ENCODE measurements at regions of chr5 and their contacts with region 1.

Region 1: GRCh38 chr5:140174465-140175366 is at the start of gene CYSTM1:
- DNase-seq: peak; percentile 96
- ATAC-seq: peak; percentile 83
- H3K4me3 Mint-ChIP-seq: peak within 1 kb of the TSS; percentile 93
- H3K27ac Mint-ChIP-seq: peak within 1 kb of the TSS; percentile 89
- H3K4me1 Mint-ChIP-seq: peaks cover 15% of the 10 kb centered on the region
- H3K27me3 Mint-ChIP-seq: no peaks in the 10 kb centered on the region
- CTCF ChIP-seq: no peak
- total RNA-seq, gene CYSTM1: 20.1 and 23.3 TPM in 2 replicates

Region 2: GRCh38 chr5:138752951-138753793 is 1421.5 kb before region 1 on chr5 and contains the start of gene CTNNA1:
- CTCF ChIA-PET with region 1: no interaction called
- POLR2A ChIA-PET with region 1: no interaction called
- intact Hi-C with region 1: loop called (anchors 10 kb)
- DNase-seq: peak; percentile 72
- ATAC-seq: peak; percentile 77
- H3K4me3 Mint-ChIP-seq: peak within 1 kb of the TSS; percentile 82
- H3K27ac Mint-ChIP-seq: peak within 1 kb of the TSS; percentile 53
- H3K4me1 Mint-ChIP-seq: peaks cover 26% of the 10 kb centered on the region
- H3K27me3 Mint-ChIP-seq: no peaks in the 10 kb centered on the region
- CTCF ChIP-seq: no peak
- total RNA-seq, gene CTNNA1: 76.0 and 77.7 TPM in 2 replicates

Region 3: DNA sequence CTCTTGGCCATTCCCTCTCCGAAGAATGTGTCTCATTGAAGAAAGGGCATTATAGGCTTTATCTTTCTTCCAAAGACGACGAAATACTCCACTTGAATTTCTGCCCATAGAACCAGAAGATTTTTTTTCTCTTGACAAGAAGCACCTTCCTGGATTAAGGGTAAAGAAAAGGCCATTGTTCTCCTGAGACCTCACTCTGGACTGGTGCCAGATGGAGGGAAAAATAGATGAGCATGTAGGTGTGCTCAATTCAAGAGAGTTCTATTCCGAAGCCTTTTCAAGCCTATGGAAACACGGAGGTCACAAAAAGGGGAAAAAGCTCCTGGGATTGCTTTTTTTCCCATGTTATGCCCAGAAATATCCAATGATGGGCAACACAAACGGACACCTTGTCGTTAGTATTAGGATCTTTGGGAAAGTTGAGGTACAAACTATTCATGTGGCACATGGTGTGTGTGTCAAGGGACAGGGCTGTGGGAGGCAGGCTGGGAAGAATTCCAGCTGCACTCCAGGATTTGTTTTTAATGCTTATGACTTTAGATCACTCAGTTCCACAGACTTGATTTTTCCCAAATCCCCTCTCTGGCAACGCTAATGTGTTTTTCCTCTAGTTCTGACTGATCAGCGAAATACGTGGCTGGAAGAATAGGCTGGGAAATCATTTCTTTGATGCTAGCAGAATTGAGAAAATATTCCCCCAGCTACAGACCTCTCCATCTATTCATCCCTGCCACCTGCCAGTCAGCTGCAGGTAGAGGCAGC is 1066.5 kb before region 1 on chr5:
- CTCF ChIA-PET with region 1: no interaction called
- POLR2A ChIA-PET with region 1: no interaction called
- intact Hi-C with region 1: no loop called
- DNase-seq: no peak
- ATAC-seq: no peak
- H3K4me3 Mint-ChIP-seq: no peak overlapping the region
- H3K27ac Mint-ChIP-seq: no peak overlapping the region
- H3K4me1 Mint-ChIP-seq: no peaks in the 10 kb centered on the region
- H3K27me3 Mint-ChIP-seq: no peaks in the 10 kb centered on the region
- CTCF ChIP-seq: no peak

Region 4: GRCh38 chr5:139439013-139439903 is 735.5 kb before region 1 on chr5 and contains the start of gene DNAJC18:
- CTCF ChIA-PET with region 1: no interaction called
- POLR2A ChIA-PET with region 1: no interaction called
- intact Hi-C with region 1: loop called (anchors 10 kb)
- DNase-seq: peak; percentile 87
- ATAC-seq: peak; percentile 95
- H3K4me3 Mint-ChIP-seq: peak within 1 kb of the TSS; percentile 99
- H3K27ac Mint-ChIP-seq: peak within 1 kb of the TSS; percentile 99
- H3K4me1 Mint-ChIP-seq: peaks cover 12% of the 10 kb centered on the region
- H3K27me3 Mint-ChIP-seq: no peaks in the 10 kb centered on the region
- CTCF ChIP-seq: no peak
- total RNA-seq, gene DNAJC18: 9.1 and 9.6 TPM in 2 replicates

Region 5: DNA sequence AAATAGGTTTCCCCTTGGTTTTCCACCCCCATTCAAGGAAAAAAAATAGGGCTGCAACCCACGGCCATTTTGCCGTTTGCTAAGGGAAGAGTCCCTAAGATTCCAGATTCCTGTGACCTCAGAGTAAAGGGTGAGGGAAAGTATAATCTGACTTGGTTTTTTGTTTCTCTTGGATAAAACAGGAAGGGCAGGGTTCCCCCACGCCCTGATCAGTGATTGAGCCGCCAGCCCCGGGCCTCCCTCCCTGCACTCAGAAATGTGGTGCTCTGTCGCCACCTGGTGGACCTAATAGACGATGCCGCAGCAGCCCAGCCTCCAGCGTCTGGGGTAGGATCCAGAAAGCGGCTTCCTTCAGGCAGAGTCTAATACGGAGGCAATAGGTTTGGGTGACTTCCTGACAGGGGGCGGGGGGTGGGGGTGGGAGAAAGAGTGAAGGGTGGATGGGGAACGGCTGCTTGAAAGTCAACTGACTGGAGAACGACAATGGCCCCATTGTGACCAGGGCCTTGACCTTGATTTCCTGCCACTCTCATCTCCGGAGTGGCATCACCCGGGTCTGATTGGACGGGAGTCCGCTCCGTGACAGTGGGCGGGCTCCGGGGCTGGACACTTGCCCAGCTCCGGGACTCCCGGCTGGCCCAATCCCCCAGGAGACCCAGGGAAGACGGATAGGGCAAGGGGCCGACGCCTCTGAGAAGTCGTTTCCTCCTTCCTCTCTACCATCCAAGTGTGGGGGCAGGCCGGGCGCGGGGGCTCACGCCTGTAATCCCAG is 17.5 kb before region 1 on chr5:
- CTCF ChIA-PET with region 1: no interaction called
- POLR2A ChIA-PET with region 1: no interaction called
- intact Hi-C with region 1: loop called (anchors 1 kb)
- DNase-seq: peak; percentile 75
- ATAC-seq: peak; percentile 100
- H3K4me3 Mint-ChIP-seq: peak overlapping the region; percentile 66
- H3K27ac Mint-ChIP-seq: no peak overlapping the region
- H3K4me1 Mint-ChIP-seq: peaks cover 10% of the 10 kb centered on the region
- H3K27me3 Mint-ChIP-seq: no peaks in the 10 kb centered on the region
- CTCF ChIP-seq: no peak

Region 6: GRCh38 chr5:140564196-140565023 is 389.7 kb after region 1 on chr5 and contains the starts of genes APBB3 and SLC35A4:
- CTCF ChIA-PET with region 1: no interaction called
- POLR2A ChIA-PET with region 1: no interaction called
- intact Hi-C with region 1: loop called (anchors 1 kb)
- DNase-seq: peak; percentile 89
- ATAC-seq: peak; percentile 90
- H3K4me3 Mint-ChIP-seq: peak within 1 kb of the TSS; percentile 98
- H3K27ac Mint-ChIP-seq: peak within 1 kb of the TSS; percentile 90
- H3K4me1 Mint-ChIP-seq: peaks cover 57% of the 10 kb centered on the region
- H3K27me3 Mint-ChIP-seq: no peaks in the 10 kb centered on the region
- CTCF ChIP-seq: no peak
- total RNA-seq, gene APBB3: 36.0 and 37.5 TPM in 2 replicates
- total RNA-seq, gene SLC35A4: 76.0 and 77.9 TPM in 2 replicates